ENCODE measurements at regions of chr1 and their contacts with region 1.

Region 1: GRCh38 chr1:183234660-183235476 is 48.8 kb downstream of the LAMC2 start:
- DNase-seq: peak; percentile 100
- H3K4me3 Mint-ChIP-seq: peak overlapping the region; percentile 71
- H3K27ac Mint-ChIP-seq: peak overlapping the region; percentile 86
- H3K4me1 Mint-ChIP-seq: peaks cover 49% of the 10 kb centered on the region
- H3K27me3 Mint-ChIP-seq: no peaks in the 10 kb centered on the region
- CTCF ChIP-seq: peak; percentile 83

Region 2: GRCh38 chr1:183139281-183139942 is 95.5 kb before region 1 on chr1:
- CTCF ChIA-PET with region 1: interaction called, 4 read pairs
- POLR2A ChIA-PET with region 1: interaction called, 3 read pairs
- intact Hi-C with region 1: loop called (anchors 2 kb)
- DNase-seq: peak; percentile 81
- H3K4me3 Mint-ChIP-seq: peak overlapping the region; percentile 1
- H3K27ac Mint-ChIP-seq: peak overlapping the region; percentile 99
- H3K4me1 Mint-ChIP-seq: peaks cover 27% of the 10 kb centered on the region
- H3K27me3 Mint-ChIP-seq: no peaks in the 10 kb centered on the region
- CTCF ChIP-seq: no peak

Region 3: DNA sequence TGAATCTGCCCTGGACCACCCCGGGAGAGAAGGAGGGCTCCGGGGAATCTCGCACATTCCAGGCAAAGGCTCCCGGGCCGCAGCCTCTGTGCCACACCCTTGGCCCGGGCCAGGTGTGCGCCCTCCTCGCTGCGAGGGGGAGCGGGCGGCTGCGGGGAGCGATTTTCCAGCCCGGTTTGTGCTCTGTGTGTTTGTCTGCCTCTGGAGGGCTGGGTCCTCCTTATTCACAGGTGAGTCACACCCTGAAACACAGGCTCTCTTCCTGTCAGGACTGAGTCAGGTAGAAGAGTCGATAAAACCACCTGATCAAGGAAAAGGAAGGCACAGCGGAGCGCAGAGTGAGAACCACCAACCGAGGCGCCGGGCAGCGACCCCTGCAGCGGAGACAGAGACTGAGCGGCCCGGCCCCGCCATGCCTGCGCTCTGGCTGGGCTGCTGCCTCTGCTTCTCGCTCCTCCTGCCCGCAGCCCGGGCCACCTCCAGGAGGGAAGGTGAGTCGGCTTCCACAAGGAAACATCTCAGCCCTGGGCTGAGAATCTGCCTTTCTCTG is 48.9 kb before region 1 on chr1 and contains the start of gene LAMC2:
- CTCF ChIA-PET with region 1: interaction called, 7 read pairs
- POLR2A ChIA-PET with region 1: interaction called, 12 read pairs
- intact Hi-C with region 1: loop called (anchors 2 kb)
- DNase-seq: peak; percentile 98
- H3K4me3 Mint-ChIP-seq: peak within 1 kb of the TSS; percentile 92
- H3K27ac Mint-ChIP-seq: peak within 1 kb of the TSS; percentile 98
- H3K4me1 Mint-ChIP-seq: peaks cover 36% of the 10 kb centered on the region
- H3K27me3 Mint-ChIP-seq: no peaks in the 10 kb centered on the region
- CTCF ChIP-seq: peak; percentile 70
- total RNA-seq, gene LAMC2: 751 and 884 TPM in 2 replicates

Region 4: DNA sequence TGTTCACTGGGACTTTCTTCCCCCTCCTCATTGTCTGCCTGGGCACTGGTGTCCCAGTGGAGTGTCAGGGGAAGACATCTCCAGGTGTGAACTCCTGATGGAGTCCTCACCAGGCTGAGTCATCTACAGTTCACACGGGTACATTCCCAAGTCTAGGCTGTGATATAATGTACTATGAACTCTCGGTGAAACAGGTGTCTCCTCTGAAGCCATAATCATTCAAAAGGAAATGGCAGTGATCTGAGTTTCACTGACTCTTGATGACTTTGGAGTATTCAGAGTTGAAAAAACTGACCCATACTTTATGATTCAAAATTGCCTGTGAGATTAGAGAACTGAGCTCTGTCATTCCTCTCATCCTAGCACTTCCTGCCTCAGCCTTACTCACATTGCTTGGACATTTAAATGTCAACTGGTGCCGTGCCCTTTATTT is 39.7 kb before region 1 on chr1:
- CTCF ChIA-PET with region 1: interaction called, 5 read pairs
- POLR2A ChIA-PET with region 1: interaction called, 5 read pairs
- intact Hi-C with region 1: loop called (anchors 1 kb)
- DNase-seq: peak; percentile 62
- H3K4me3 Mint-ChIP-seq: no peak overlapping the region
- H3K27ac Mint-ChIP-seq: peak overlapping the region; percentile 87
- H3K4me1 Mint-ChIP-seq: peaks cover 56% of the 10 kb centered on the region
- H3K27me3 Mint-ChIP-seq: no peaks in the 10 kb centered on the region
- CTCF ChIP-seq: no peak

Region 5: GRCh38 chr1:183209533-183210158 is 25.2 kb before region 1 on chr1:
- CTCF ChIA-PET with region 1: interaction called, 9 read pairs
- POLR2A ChIA-PET with region 1: interaction called, 19 read pairs
- intact Hi-C with region 1: no loop called
- DNase-seq: peak; percentile 96
- H3K4me3 Mint-ChIP-seq: no peak overlapping the region
- H3K27ac Mint-ChIP-seq: peak overlapping the region; percentile 94
- H3K4me1 Mint-ChIP-seq: peaks cover 46% of the 10 kb centered on the region
- H3K27me3 Mint-ChIP-seq: no peaks in the 10 kb centered on the region
- CTCF ChIP-seq: no peak

Region 6: DNA sequence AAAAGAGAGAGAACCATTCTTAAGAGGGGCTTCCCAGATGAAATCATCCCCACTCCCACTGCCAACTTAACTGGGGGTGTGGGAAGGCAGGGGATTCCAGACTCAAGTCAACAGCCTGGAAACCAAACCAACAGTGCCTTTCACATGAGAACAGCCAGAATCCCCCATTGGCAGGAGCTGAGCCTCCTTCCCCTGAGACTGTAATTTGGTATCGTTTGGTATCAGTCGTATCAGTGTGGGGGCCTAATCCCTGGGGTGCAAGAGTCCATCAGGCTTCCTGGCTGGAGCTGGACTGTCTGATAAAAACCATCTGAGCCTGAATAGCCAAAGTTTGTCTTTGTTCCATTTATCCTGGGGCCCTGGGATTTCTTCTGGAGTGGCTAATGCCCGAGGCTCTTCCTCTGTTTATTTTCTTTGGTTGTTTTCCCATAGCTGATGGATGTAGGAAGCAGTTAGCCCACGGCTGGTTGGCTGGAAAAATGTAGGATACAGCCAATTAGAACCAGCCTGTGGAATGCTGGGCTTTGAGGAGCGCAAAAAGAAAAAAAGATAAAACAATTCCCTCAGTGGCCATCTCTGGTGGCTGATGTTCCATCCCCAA is 35.8 kb after region 1 on chr1:
- CTCF ChIA-PET with region 1: interaction called, 13 read pairs
- POLR2A ChIA-PET with region 1: interaction called, 15 read pairs
- intact Hi-C with region 1: loop called (anchors 1 kb)
- DNase-seq: peak; percentile 94
- H3K4me3 Mint-ChIP-seq: no peak overlapping the region
- H3K27ac Mint-ChIP-seq: peak overlapping the region; percentile 90
- H3K4me1 Mint-ChIP-seq: peaks cover 59% of the 10 kb centered on the region
- H3K27me3 Mint-ChIP-seq: no peaks in the 10 kb centered on the region
- CTCF ChIP-seq: no peak

Region 7: GRCh38 chr1:183543619-183544204 is 308.8 kb after region 1 on chr1:
- CTCF ChIA-PET with region 1: no interaction called
- POLR2A ChIA-PET with region 1: no interaction called
- intact Hi-C with region 1: loop called (anchors 1 kb)
- DNase-seq: peak; percentile 77
- H3K4me3 Mint-ChIP-seq: no peak overlapping the region
- H3K27ac Mint-ChIP-seq: no peak overlapping the region
- H3K4me1 Mint-ChIP-seq: peaks cover 7% of the 10 kb centered on the region
- H3K27me3 Mint-ChIP-seq: no peaks in the 10 kb centered on the region
- CTCF ChIP-seq: peak; percentile 77

Measured in MCF 10A (cell line).